Posterior vena cava (tissue), 2 donors: ENCODE measurements at regions of chr4 and their contacts with region 1.

Region 1: DNA sequence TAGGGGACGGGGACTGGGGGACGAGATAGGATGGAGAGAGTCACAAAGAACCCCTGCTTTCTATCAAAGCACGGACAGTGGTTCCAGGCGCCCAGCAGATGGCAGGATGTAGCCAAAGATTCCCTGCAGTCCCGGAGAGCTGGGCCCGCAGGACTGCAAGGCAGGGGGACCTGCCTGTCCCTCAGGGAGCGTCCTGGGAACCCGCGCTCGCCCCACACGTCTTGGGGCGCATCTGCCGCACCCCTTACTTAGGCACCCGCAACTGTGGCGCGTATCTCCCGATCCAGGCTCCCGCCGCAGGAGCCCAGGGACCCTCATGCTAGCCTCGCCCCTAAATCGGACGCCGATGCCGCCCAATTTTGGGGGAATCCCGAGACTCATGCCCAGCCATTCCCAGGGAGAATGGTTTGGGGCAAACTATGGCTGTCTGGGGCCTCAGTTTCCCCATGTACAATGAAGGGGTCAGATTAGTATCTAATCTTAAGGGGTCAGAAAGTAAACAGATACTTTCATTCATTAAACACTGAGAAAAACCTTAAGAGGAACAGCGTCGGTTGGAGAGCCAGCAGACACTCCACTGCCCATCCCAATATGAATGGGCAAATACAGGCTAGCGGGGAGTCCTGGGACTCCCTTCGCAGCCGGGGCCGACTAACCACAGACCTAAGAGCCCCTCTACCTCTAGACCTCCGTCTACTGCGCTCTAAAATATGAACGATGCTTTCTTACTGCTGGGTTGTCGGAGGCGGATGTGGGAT is 581 bp upstream of the STK32B start:
- DNase-seq: peak; percentile 90

Region 2: DNA sequence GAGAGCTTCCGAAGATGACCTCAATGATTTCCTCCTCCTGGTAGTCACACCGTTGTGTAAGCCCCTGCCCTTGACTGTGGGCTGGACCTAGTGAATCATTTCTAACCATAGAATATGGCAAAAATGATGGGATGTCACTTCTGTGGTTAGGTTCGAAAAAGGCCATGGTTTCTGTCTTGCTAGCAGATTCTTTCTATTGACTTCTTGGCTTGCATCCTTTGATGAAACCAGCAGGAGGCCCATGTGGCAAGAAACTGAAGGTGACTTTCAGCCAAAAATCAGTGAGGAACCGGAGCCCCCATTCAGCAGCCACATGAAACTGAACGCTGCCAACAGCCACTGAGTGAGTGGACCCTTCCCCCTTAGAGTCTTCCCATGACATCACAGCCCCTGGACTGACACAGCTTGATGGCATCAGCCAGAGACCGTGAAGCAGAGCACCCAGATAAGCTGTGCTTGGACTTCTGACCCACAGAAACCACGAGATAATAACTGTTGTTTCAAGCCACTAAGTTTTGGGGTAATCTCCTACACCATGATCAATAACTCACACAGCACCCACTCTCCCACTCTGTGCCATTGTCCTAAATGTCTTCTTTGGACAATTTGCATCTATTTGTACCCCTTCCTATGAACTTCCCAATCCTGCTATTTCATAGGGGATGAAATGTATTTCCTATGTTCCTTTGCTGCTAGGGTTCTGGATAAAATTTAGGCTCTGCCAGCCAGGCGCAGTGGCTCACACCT is 360.8 kb before region 1 on chr4:
- intact Hi-C with region 1: no loop called
- DNase-seq: no peak

Region 3: GRCh38 chr4:5142726-5143125 is 92.0 kb after region 1 on chr4:
- intact Hi-C with region 1: loop called in 1 of 2 experiments (anchors 5 kb)
- DNase-seq: no peak